Caco-2 (cell line): ENCODE measurements at regions of chr7 and their contacts with region 1.

Region 1: GRCh38 chr7:80392229-80393169 is 119.4 kb downstream of the GNAT3 start:
- DNase-seq: no peak
- H3K4me3 ChIP-seq: no peak overlapping the region
- H3K4me3 Mint-ChIP-seq: no peak overlapping the region
- H3K27ac Mint-ChIP-seq: no peak overlapping the region
- H3K4me1 ChIP-seq: no peaks in the 10 kb centered on the region
- H3K4me1 Mint-ChIP-seq: no peaks in the 10 kb centered on the region
- H3K27me3 ChIP-seq: no peaks in the 10 kb centered on the region
- H3K27me3 Mint-ChIP-seq: no peaks in the 10 kb centered on the region
- CTCF ChIP-seq: peak; percentile 31 to 33

Region 2: DNA sequence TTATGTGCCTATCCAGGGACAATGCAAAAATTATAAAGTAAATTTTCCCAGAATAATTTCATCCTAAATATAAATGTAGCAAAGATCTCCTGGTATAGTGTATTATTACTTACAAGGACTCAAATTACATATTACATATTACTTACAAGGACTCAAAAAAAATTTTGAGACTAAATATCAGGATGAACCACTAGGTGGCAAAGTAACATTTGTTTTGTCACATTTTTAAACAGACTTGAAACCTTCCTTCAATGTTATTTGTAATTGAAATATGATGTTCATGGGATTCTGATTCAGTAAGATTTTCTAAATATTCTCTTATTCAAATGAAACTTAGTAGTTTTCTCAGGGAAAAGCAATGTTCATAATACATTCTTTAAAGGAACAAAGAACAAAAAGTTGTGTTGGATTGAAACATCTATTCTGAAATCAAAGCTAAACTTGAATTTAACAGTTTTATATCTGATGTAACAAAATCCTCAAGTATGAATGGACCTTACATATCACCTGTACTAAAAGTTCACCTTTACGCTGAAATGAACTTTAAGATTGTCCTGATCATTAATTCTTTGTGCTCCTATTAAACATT is 332.2 kb before region 1 on chr7:
- CTCF ChIA-PET with region 1: no interaction called
- POLR2A ChIA-PET with region 1: no interaction called
- intact Hi-C with region 1: loop called (anchors 1 kb)
- DNase-seq: peak in 1 of 2 experiments; percentile 24
- H3K4me3 ChIP-seq: no peak overlapping the region
- H3K4me3 Mint-ChIP-seq: no peak overlapping the region
- H3K27ac Mint-ChIP-seq: no peak overlapping the region
- H3K4me1 ChIP-seq: no peaks in the 10 kb centered on the region; the same call in 1 of the 2 replicates
- H3K4me1 Mint-ChIP-seq: no peaks in the 10 kb centered on the region
- H3K27me3 ChIP-seq: no peaks in the 10 kb centered on the region
- H3K27me3 Mint-ChIP-seq: peaks cover 6% of the 10 kb centered on the region
- CTCF ChIP-seq: peak; percentile 31 to 43

Region 3: GRCh38 chr7:80206763-80207162 is 185.7 kb before region 1 on chr7:
- CTCF ChIA-PET with region 1: no interaction called
- POLR2A ChIA-PET with region 1: no interaction called
- intact Hi-C with region 1: loop called (anchors 2 kb)
- DNase-seq: no peak
- H3K4me3 ChIP-seq: no peak overlapping the region
- H3K4me3 Mint-ChIP-seq: no peak overlapping the region
- H3K27ac Mint-ChIP-seq: no peak overlapping the region
- H3K4me1 ChIP-seq: peaks cover 13% of the 10 kb centered on the region
- H3K4me1 Mint-ChIP-seq: peaks cover 20% of the 10 kb centered on the region
- H3K27me3 ChIP-seq: no peaks in the 10 kb centered on the region
- H3K27me3 Mint-ChIP-seq: no peaks in the 10 kb centered on the region
- CTCF ChIP-seq: peak in 1 of 2 experiments; percentile 15

Region 4: GRCh38 chr7:80335511-80336231 is 56.8 kb before region 1 on chr7:
- CTCF ChIA-PET with region 1: no interaction called
- POLR2A ChIA-PET with region 1: no interaction called
- intact Hi-C with region 1: loop called (anchors 5 kb)
- DNase-seq: peak; percentile 36 to 70
- H3K4me3 ChIP-seq: no peak overlapping the region
- H3K4me3 Mint-ChIP-seq: peak overlapping the region; percentile 34
- H3K27ac Mint-ChIP-seq: no peak overlapping the region
- H3K4me1 ChIP-seq: no peaks in the 10 kb centered on the region; the same call in 1 of the 2 replicates
- H3K4me1 Mint-ChIP-seq: no peaks in the 10 kb centered on the region
- H3K27me3 ChIP-seq: no peaks in the 10 kb centered on the region
- H3K27me3 Mint-ChIP-seq: peaks cover 4% of the 10 kb centered on the region
- CTCF ChIP-seq: no peak

Region 5: DNA sequence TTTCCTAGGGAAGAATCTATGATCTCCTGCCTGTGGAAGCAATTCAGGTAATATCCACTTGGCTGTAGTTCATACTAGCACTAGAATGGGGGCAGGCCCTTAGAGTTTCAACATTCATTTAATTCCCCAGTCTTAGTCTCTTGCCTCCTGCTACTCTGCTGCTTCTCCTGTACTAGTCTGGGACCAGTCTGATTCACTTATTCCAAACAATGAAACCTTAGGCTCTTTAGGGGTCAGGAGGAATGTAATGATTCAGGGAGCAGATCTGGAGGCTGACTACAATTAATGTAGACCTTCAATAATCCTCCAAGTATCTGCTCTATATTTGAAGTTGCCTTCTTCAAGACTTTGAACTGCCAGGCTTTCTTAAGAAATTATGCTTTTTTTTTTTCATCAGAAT is 17.6 kb after region 1 on chr7:
- CTCF ChIA-PET with region 1: no interaction called
- POLR2A ChIA-PET with region 1: no interaction called
- intact Hi-C with region 1: no loop called
- DNase-seq: no peak
- H3K4me3 ChIP-seq: no peak overlapping the region
- H3K4me3 Mint-ChIP-seq: no peak overlapping the region
- H3K27ac Mint-ChIP-seq: no peak overlapping the region
- H3K4me1 ChIP-seq: no peaks in the 10 kb centered on the region
- H3K4me1 Mint-ChIP-seq: no peaks in the 10 kb centered on the region
- H3K27me3 ChIP-seq: no peaks in the 10 kb centered on the region
- H3K27me3 Mint-ChIP-seq: no peaks in the 10 kb centered on the region
- CTCF ChIP-seq: no peak

Region 6: DNA sequence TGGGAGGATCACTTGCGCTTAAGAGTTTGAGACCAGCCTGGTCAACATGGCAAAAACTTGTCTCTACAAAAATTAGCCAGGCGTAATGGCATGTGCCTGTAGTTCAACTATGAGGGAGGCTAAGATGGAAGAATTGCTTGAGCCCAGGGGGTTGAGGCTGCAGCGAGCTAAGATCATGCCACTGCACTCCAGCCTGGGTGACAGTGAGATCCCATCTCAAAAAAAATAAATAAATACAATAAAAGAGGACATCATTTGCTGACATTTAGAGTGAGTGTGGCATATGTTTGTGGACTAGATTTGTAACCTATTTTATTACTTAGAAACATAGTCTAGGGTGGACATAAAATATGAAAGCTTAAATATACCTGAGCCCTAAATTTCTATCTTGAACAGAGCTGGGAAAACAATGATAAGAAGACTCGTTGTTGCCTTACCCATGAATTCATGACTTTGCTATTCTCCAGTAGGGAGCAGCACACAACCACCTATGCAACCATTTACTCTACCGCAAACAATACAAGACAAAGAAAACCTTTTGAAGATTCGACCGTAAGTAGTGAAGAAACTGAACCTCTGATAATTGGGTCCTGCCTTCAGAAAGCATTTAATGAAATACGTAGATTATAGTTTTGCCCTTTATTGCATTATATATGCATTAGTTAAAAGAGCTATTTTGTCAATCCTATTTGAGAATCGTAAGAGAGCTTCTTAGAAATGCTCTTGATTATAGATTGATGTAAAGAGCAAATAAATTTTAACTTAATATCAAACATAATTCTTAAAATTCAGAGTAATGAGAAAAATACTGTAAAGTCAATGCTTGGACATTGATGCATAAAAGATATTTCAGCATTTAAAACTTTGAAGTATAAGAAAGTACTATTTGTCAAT is 35.9 kb after region 1 on chr7:
- CTCF ChIA-PET with region 1: no interaction called
- POLR2A ChIA-PET with region 1: no interaction called
- intact Hi-C with region 1: no loop called
- DNase-seq: peak; percentile 39 to 50
- H3K4me3 ChIP-seq: no peak overlapping the region
- H3K4me3 Mint-ChIP-seq: no peak overlapping the region
- H3K27ac Mint-ChIP-seq: no peak overlapping the region
- H3K4me1 ChIP-seq: no peaks in the 10 kb centered on the region
- H3K4me1 Mint-ChIP-seq: no peaks in the 10 kb centered on the region
- H3K27me3 ChIP-seq: no peaks in the 10 kb centered on the region
- H3K27me3 Mint-ChIP-seq: peaks cover 7% of the 10 kb centered on the region
- CTCF ChIP-seq: peak; percentile 64 to 78